ENCODE measurements at regions of chr1 and their contacts with region 1.

Region 1: GRCh38 chr1:206912445-206913095 is 9.2 kb downstream of the FCMR start:
- DNase-seq: peak; percentile 52 to 70
- ATAC-seq: peak in 3 of 4 donors; percentile 46 to 77 (median 69)
- H3K4me3 ChIP-seq: no peak overlapping the region
- H3K27ac ChIP-seq: no peak overlapping the region
- H3K4me1 ChIP-seq: peaks cover 3% of the 10 kb centered on the region
- H3K27me3 ChIP-seq: peaks cover 0 to 4% (median 0%) of the 10 kb centered on the region in 3 donors
- CTCF ChIP-seq: peak; percentile 87

Region 2: GRCh38 chr1:206059355-206059915 is 853.1 kb before region 1 on chr1:
- intact Hi-C with region 1: no loop called
- DNase-seq: no peak
- ATAC-seq: no peak
- H3K4me3 ChIP-seq: no peak overlapping the region
- H3K27ac ChIP-seq: no peak overlapping the region
- H3K4me1 ChIP-seq: no peaks in the 10 kb centered on the region
- H3K27me3 ChIP-seq: no peaks in the 10 kb centered on the region
- CTCF ChIP-seq: no peak

Region 3: DNA sequence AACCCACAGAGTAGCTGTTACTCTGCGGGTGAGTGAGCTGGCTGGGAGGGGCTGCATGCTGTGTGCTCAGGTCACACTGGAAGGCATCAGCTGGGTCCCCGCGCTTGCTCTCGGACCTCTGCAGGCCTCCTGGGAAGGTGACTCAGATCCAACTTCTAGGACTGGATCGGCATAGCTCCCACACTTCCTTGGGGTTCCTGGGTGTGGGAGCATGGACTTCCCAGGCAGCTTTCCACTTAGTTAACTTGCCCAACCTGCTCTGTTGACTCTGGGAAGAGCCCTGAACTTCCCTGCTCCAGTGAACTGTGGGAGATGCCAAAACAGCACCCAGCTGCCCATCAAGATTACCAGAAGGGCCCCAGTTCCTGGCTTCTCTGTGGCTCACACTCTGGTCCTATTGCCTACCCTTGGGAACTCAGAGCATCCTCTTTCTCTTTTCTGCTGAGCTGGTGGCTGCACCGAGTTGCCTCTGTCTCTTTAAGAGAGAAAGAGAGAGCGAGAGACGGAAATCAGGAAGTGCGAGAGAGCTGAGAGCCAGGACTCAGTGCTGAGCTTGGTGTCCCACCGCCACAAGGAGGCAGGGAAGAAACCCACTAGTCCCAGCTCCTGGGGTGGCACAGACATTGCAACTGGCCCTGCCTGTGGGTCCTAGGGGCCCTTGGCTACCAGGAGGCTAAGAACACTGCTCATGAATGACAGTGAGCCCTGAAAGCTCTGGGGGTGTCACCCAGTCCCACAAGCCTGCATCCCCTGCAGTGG is 442.5 kb before region 1 on chr1 and contains the start of gene IKBKE:
- intact Hi-C with region 1: loop called in 1 of 2 experiments (anchors 10 kb)
- DNase-seq: no peak
- ATAC-seq: peak in 3 of 4 donors; percentile 41 to 60 (median 44)
- H3K4me3 ChIP-seq: peak within 1 kb of the TSS; percentile 55
- H3K27ac ChIP-seq: no peak within 1 kb of the TSS
- H3K4me1 ChIP-seq: peaks cover 5% of the 10 kb centered on the region
- H3K27me3 ChIP-seq: peaks cover 0 to 35% (median 0%) of the 10 kb centered on the region in 3 donors
- CTCF ChIP-seq: no peak
- total RNA-seq, gene IKBKE: 0.44 to 0.89 (median 0.58) TPM

Region 4: DNA sequence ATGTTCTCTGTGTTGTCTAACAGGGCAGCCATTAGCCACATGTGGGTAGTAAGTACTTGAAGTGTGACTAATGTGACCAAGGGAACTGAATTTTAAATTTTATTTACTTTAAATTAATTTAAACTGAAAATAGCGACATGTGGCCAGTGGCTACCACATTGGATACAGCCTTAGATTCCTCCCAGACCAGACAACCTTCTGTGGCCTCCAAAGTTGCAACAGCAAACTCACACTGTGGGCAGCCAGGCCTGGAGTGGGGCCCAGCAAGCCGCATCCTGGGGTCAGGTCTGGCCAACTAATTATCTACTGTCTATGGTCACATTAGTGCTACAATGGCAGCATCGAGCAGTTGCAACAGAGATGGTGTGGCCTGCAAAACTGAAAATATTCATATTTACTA is 312.0 kb before region 1 on chr1:
- intact Hi-C with region 1: no loop called
- DNase-seq: no peak
- ATAC-seq: peak in 1 of 4 donors; percentile 31
- H3K4me3 ChIP-seq: no peak overlapping the region
- H3K27ac ChIP-seq: no peak overlapping the region
- H3K4me1 ChIP-seq: no peaks in the 10 kb centered on the region
- H3K27me3 ChIP-seq: no peaks in the 10 kb centered on the region
- CTCF ChIP-seq: no peak

Region 5: GRCh38 chr1:206658264-206658980 is 254.1 kb before region 1 on chr1:
- intact Hi-C with region 1: loop called (anchors 2 to 5 kb)
- DNase-seq: peak; percentile 58 to 82
- ATAC-seq: peak; percentile 85 to 92 (median 88)
- H3K4me3 ChIP-seq: peak overlapping the region; percentile 51
- H3K27ac ChIP-seq: peak overlapping the region; percentile 87
- H3K4me1 ChIP-seq: peaks cover 36% of the 10 kb centered on the region
- H3K27me3 ChIP-seq: no peaks in the 10 kb centered on the region
- CTCF ChIP-seq: peak; percentile 90

Region 6: DNA sequence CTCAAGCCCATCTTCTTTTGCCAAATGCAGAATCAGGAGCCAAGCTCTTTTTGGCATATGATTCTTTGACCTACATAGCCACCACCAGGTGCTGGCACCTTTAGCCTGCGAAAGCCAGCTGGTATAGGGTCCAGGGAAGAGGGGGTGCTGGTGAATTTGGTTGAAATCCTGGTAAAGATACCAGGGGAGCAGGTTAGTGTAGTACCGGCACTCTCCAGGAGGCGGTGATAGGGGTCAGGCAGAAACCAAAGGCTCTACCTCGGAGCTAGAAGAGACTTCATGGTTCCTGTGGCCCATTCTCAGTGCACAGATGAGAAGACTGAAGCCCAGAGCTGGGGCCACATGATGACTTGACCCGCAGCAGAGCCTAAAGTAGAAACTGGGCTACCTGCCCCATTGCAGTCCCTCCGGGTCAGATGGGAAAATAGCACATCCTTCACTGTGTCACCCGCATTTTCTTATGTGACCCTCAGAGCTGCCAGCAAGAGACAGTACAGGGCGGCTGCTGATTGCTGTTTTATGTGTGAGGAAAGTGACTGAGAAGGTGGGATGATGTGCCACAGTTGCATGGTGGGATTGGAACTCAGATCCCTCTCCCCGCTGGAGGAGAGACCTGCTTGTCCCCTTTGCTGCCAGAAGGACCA is 177.9 kb before region 1 on chr1:
- intact Hi-C with region 1: loop called in 1 of 2 experiments (anchors 5 kb)
- DNase-seq: peak; percentile 49 to 71
- ATAC-seq: peak; percentile 25 to 56 (median 45)
- H3K4me3 ChIP-seq: no peak overlapping the region
- H3K27ac ChIP-seq: no peak overlapping the region
- H3K4me1 ChIP-seq: peaks cover 7% of the 10 kb centered on the region
- H3K27me3 ChIP-seq: no peaks in the 10 kb centered on the region
- CTCF ChIP-seq: peak; percentile 50

Region 7: GRCh38 chr1:206865013-206865671 is 47.4 kb before region 1 on chr1 and contains the start of gene IL20:
- intact Hi-C with region 1: loop called (anchors 2 to 5 kb)
- DNase-seq: peak; percentile 84 to 91
- ATAC-seq: peak; percentile 86 to 96 (median 94)
- H3K4me3 ChIP-seq: no peak within 1 kb of the TSS
- H3K27ac ChIP-seq: no peak within 1 kb of the TSS
- H3K4me1 ChIP-seq: peaks cover 6% of the 10 kb centered on the region
- H3K27me3 ChIP-seq: peaks cover 0 to 5% (median 0%) of the 10 kb centered on the region in 3 donors
- CTCF ChIP-seq: peak; percentile 81
- total RNA-seq, gene IL20: 1.2 TPM in 1 of 4 donors, not detected in the others